ENCODE measurements at regions of chr11 and their contacts with region 1.

Region 1: DNA sequence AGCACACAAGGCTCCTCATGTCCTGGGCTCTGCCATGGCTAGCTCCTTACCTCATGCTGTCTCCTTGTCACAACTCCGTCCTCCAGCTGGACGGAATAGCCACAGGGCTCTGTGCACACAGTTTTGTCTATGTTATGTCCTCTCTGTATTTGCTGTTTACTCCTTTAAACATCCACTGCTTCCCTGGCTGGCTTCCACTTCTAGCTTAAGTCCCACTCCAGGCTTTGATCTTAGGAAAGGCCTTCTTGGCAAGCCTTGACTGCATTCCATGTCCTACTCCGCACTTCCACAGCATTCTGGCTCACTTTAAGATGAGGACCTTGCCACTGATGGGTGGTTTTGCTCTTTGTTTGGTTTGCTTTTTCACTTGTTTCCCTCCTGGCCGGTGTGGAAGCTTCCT is 22.9 kb upstream of the ROBO3 start:
- DNase-seq: no peak
- ATAC-seq: no peak
- H3K4me3 ChIP-seq: no peak overlapping the region
- H3K27ac ChIP-seq: no peak overlapping the region
- H3K4me1 ChIP-seq: peaks cover 0 to 12% (median 4%) of the 10 kb centered on the region in 4 donors
- H3K27me3 ChIP-seq: peaks cover 12 to 31% of the 10 kb centered on the region in 2 donors
- CTCF ChIP-seq: no peak
- POLR2A ChIP-seq: no peak

Region 2: GRCh38 chr11:124656774-124657630 is 185.3 kb before region 1 on chr11:
- intact Hi-C with region 1: loop called in 1 of 2 experiments (anchors 10 kb)
- DNase-seq: no peak
- ATAC-seq: no peak
- H3K4me3 ChIP-seq: no peak overlapping the region
- H3K27ac ChIP-seq: no peak overlapping the region
- H3K4me1 ChIP-seq: no peaks in the 10 kb centered on the region
- H3K27me3 ChIP-seq: no peaks in the 10 kb centered on the region
- CTCF ChIP-seq: no peak
- POLR2A ChIP-seq: no peak

Region 3: GRCh38 chr11:124739479-124740276 is 102.6 kb before region 1 on chr11 and contains the start of gene NRGN:
- intact Hi-C with region 1: no loop called
- DNase-seq: peak; percentile 89 to 93 (median 92)
- ATAC-seq: peak; percentile 99
- H3K4me3 ChIP-seq: peak within 1 kb of the TSS; percentile 18 to 46 (median 33)
- H3K27ac ChIP-seq: no peak within 1 kb of the TSS
- H3K4me1 ChIP-seq: peaks cover 0 to 11% (median 0%) of the 10 kb centered on the region in 4 donors
- H3K27me3 ChIP-seq: no peaks in the 10 kb centered on the region
- CTCF ChIP-seq: no peak
- POLR2A ChIP-seq: no peak
- total RNA-seq, gene NRGN: 0.43 to 4.6 (median 1.4) TPM in 5 of 6 experiments, not detected in the other

Region 4: DNA sequence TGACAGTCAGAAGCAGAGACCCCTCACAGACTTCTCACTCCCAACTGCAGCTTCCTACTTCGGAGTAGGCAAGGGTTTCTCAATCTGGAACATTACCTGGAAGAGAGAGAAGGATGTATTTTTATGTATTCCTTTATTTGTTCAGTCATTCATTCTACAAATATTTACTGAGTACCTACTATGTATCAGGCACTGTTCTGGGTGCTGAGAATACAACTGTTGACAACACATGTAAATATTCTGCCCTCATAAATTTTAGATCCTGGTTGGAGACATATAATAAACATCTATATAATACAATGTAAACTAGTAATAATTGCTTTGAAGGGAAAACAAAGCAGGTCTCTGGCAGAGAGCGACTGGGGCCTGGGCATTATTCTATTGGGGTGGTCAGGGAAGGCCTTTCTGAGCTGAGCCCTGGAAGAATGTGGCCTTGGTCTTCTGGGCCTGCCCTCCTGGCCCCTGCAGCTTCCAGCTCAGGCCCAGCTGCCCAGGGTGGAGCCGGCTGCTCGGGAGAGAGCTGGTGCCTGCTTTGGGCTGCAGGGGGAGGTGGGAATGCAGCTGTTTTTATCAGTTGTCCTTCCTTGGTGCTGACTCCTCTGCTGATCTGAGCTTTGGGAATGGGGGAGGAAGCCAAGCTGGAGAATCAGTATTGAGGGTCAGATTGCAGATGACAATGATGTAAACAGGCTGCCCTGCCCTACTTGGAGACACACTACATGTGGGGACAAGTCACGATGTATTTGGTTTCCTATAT is 369.1 kb after region 1 on chr11:
- intact Hi-C with region 1: no loop called
- DNase-seq: no peak
- ATAC-seq: no peak
- H3K4me3 ChIP-seq: no peak overlapping the region
- H3K27ac ChIP-seq: no peak overlapping the region
- H3K4me1 ChIP-seq: no peaks in the 10 kb centered on the region
- H3K27me3 ChIP-seq: no peaks in the 10 kb centered on the region
- CTCF ChIP-seq: no peak
- POLR2A ChIP-seq: no peak

Measured in right lobe of liver (tissue), 6 donors.